CD4-positive, alpha-beta memory T cell (primary cell): ENCODE measurements at regions of chr1 and their contacts with region 1.

Region 1: GRCh38 chr1:110780600-110781484 is 92.1 kb upstream of the CD53 start:
- DNase-seq: peak; percentile 74 to 81 (median 76)
- H3K4me3 ChIP-seq: no peak overlapping the region
- H3K4me3 Mint-ChIP-seq: peak overlapping the region in 5 of 8 donors; percentile 3 to 47 (median 28)
- H3K27ac ChIP-seq: no peak overlapping the region
- H3K27ac Mint-ChIP-seq: peak overlapping the region in 3 of 7 donors; percentile 31 to 74 (median 67)
- H3K4me1 ChIP-seq: peaks cover 37% of the 10 kb centered on the region
- H3K4me1 Mint-ChIP-seq: peaks cover 33 to 51% (median 39%) of the 10 kb centered on the region in 4 donors
- H3K27me3 ChIP-seq: no peaks in the 10 kb centered on the region
- H3K27me3 Mint-ChIP-seq: peaks cover 0 to 1% of the 10 kb centered on the region in 2 donors

Region 2: DNA sequence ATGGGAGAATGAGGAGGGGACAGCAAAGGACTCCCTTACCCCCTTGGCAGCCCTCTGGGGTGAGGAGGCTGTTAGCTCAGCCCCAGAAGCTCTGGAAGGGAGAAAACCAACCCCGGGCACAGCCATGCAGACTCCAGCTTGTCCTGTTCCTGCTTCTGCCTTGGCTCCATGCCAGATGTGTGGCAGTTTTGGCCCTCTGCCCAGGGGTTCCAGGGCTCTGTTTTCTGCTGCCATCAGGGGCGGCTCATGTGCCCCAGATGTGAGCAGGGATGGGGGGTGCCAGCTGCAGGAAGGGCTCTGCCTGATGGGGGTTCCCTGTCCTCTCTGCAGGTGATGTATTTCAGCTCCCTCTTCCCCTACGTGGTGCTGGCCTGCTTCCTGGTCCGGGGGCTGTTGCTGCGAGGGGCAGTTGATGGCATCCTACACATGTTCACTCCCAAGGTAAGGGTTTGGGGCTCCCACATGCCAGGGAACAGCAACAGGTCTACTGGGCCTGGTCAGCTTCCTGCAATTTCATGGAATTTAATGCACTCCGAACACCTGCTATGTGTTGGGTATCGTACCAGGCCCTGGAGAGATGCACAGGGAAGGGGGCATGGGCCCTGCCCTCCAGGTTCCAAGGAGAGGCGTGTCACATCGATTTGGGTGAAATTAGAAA is 604.4 kb before region 1 on chr1:
- CTCF ChIA-PET with region 1: no interaction called
- POLR2A ChIA-PET with region 1: no interaction called
- intact Hi-C with region 1: no loop called
- DNase-seq: no peak
- H3K4me3 ChIP-seq: no peak overlapping the region
- H3K4me3 Mint-ChIP-seq: no peak overlapping the region
- H3K27ac ChIP-seq: no peak overlapping the region
- H3K27ac Mint-ChIP-seq: no peak overlapping the region
- H3K4me1 ChIP-seq: no peaks in the 10 kb centered on the region
- H3K4me1 Mint-ChIP-seq: no peaks in the 10 kb centered on the region
- H3K27me3 ChIP-seq: no peaks in the 10 kb centered on the region
- H3K27me3 Mint-ChIP-seq: peaks cover 3 to 23% of the 10 kb centered on the region in 2 donors

Region 3: DNA sequence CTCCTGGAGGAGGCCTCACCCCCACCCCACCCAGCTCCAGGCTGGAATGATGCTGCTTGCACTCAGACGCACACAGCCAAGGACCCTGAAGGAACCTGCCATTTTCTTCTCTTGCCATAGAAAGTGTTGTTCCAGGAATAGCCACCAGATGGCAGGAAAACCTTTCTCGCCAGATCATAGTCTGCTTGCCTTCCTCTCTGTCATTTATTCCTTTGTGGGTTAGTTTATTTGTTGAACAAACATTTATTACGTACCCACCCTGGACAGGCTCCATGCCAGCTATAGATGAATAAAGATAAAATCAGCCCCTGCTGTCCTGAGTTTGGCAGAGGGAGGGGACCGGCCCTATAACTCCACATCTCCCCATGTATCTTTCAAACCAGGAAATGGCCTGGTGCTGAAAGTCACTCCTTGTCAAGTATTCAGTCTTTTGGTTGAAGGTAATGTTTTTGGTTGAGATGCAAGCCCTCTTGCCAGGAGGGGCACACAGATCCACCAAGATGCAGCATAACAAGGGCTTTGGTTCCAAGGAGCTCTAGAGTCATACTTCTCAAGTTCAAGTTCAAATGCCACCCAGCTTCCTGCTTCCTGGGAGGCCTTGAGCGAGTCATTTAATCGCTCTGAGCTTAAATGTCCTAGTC is 577.7 kb before region 1 on chr1:
- CTCF ChIA-PET with region 1: interaction called, 10 read pairs
- POLR2A ChIA-PET with region 1: no interaction called
- intact Hi-C with region 1: loop called (anchors 1 kb)
- DNase-seq: peak; percentile 75 to 82 (median 78)
- H3K4me3 ChIP-seq: no peak overlapping the region
- H3K4me3 Mint-ChIP-seq: peak overlapping the region in 3 of 8 donors; percentile 2 to 44 (median 34)
- H3K27ac ChIP-seq: no peak overlapping the region
- H3K27ac Mint-ChIP-seq: peak overlapping the region; percentile 48 to 93 (median 83)
- H3K4me1 ChIP-seq: peaks cover 19% of the 10 kb centered on the region
- H3K4me1 Mint-ChIP-seq: peaks cover 13 to 31% (median 20%) of the 10 kb centered on the region in 4 donors
- H3K27me3 ChIP-seq: no peaks in the 10 kb centered on the region
- H3K27me3 Mint-ChIP-seq: no peaks in the 10 kb centered on the region

Region 4: GRCh38 chr1:110524311-110525251 is 256.3 kb before region 1 on chr1:
- CTCF ChIA-PET with region 1: interaction called, 11 read pairs
- POLR2A ChIA-PET with region 1: no interaction called
- intact Hi-C with region 1: loop called (anchors 1 kb)
- DNase-seq: peak in 4 of 5 donors; percentile 25 to 48 (median 44)
- H3K4me3 ChIP-seq: no peak overlapping the region
- H3K4me3 Mint-ChIP-seq: peak overlapping the region in 5 of 8 donors; percentile 14 to 61 (median 51)
- H3K27ac ChIP-seq: no peak overlapping the region
- H3K27ac Mint-ChIP-seq: no peak overlapping the region
- H3K4me1 ChIP-seq: no peaks in the 10 kb centered on the region
- H3K4me1 Mint-ChIP-seq: peaks cover 0 to 6% (median 2%) of the 10 kb centered on the region in 4 donors
- H3K27me3 ChIP-seq: peaks cover 5% of the 10 kb centered on the region
- H3K27me3 Mint-ChIP-seq: peaks cover 15 to 28% of the 10 kb centered on the region in 2 donors

Region 5: GRCh38 chr1:110612065-110612751 is 168.6 kb before region 1 on chr1:
- CTCF ChIA-PET with region 1: interaction called, 175 read pairs
- POLR2A ChIA-PET with region 1: no interaction called
- intact Hi-C with region 1: no loop called
- DNase-seq: no peak
- H3K4me3 ChIP-seq: no peak overlapping the region
- H3K4me3 Mint-ChIP-seq: no peak overlapping the region
- H3K27ac ChIP-seq: no peak overlapping the region
- H3K27ac Mint-ChIP-seq: no peak overlapping the region
- H3K4me1 ChIP-seq: peaks cover 22% of the 10 kb centered on the region
- H3K4me1 Mint-ChIP-seq: peaks cover 10 to 26% (median 20%) of the 10 kb centered on the region in 4 donors
- H3K27me3 ChIP-seq: peaks cover 7% of the 10 kb centered on the region
- H3K27me3 Mint-ChIP-seq: peaks cover 7 to 18% of the 10 kb centered on the region in 2 donors

Region 6: DNA sequence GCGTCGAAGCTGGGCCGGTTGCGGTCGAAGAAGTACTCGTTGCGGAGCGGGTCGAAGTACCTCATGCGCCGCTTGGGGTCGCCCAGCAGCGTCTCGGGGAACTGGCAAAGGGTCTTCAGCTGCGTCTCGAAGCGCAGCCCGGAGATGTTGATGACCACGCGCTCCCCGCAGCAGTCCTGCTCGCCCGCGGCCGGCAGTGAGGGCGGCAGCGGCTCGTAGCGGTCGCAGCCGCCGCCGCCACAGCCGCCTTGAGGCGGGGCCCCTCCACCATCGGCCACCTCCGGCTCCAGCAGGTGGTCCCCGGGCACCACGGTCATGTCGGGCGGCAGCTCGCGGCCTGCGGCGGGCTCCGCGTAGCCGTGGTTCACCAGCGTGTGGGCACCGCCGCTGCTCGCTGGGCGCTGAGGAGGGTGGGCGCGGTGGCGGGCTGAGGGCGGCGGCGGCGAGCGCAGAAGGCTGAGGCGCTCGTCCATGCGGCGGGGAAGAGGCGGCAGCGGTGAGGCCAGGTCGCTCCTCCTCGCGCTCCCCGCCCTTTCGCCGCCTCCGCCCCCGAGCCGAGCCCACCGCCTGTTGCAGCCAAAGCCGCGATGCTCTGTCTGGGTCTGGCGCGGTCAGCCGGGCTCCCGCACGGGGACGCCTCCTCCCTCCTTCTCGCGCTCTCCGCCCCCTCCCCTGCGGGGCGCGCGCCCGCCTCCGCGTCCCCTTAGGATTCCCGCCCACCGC is 106.3 kb before region 1 on chr1 and contains the start of gene KCNA3:
- CTCF ChIA-PET with region 1: interaction called, 6 read pairs
- POLR2A ChIA-PET with region 1: interaction called, 18 read pairs
- intact Hi-C with region 1: no loop called
- DNase-seq: peak; percentile 67 to 79 (median 69)
- H3K4me3 ChIP-seq: peak within 1 kb of the TSS; percentile 73 to 78
- H3K4me3 Mint-ChIP-seq: peak within 1 kb of the TSS; percentile 84 to 100 (median 100)
- H3K27ac ChIP-seq: peak within 1 kb of the TSS; percentile 91
- H3K27ac Mint-ChIP-seq: peak within 1 kb of the TSS; percentile 76 to 100 (median 99)
- H3K4me1 ChIP-seq: peaks cover 38% of the 10 kb centered on the region
- H3K4me1 Mint-ChIP-seq: peaks cover 28 to 79% (median 38%) of the 10 kb centered on the region in 4 donors
- H3K27me3 ChIP-seq: no peaks in the 10 kb centered on the region
- H3K27me3 Mint-ChIP-seq: no peaks in the 10 kb centered on the region
- total RNA-seq, gene KCNA3: 124 TPM

Region 7: DNA sequence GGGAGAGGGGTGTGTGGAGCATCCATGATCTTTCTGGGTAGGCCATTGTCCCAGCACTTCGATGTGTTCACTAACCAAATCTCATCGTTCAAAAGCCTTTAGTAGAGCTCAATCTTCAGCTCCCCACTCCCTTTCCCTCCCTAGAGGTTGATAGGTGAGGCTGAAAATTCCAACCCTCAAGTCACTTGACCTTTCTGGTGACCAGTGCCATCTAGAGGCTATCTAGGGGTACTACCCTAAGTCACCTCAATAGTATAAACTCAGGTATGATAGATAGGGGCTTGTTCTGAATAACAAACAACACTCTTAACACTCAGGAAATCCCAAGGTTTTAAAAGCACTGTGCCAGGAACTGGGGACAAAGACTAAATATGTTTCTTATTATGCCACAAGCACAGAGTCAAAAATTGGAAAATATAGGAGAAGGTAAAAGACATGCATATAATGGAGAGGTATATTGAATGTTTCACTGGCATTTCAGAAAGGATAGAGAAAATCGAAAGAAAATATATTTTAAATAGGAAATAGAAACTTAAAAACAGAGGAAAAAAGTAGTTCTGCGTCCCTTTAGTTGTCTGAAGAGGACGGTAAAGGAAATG is 49.2 kb after region 1 on chr1:
- CTCF ChIA-PET with region 1: interaction called, 145 read pairs
- POLR2A ChIA-PET with region 1: interaction called, 5 read pairs
- intact Hi-C with region 1: loop called (anchors 1 kb)
- DNase-seq: peak; percentile 41 to 63 (median 57)
- H3K4me3 ChIP-seq: no peak overlapping the region
- H3K4me3 Mint-ChIP-seq: no peak overlapping the region
- H3K27ac ChIP-seq: no peak overlapping the region
- H3K27ac Mint-ChIP-seq: peak overlapping the region in 1 of 7 donors; percentile 42
- H3K4me1 ChIP-seq: peaks cover 7% of the 10 kb centered on the region
- H3K4me1 Mint-ChIP-seq: peaks cover 5 to 8% (median 7%) of the 10 kb centered on the region in 4 donors
- H3K27me3 ChIP-seq: no peaks in the 10 kb centered on the region
- H3K27me3 Mint-ChIP-seq: peaks cover 0 to 10% of the 10 kb centered on the region in 2 donors

Region 8: GRCh38 chr1:111030590-111030989 is 249.7 kb after region 1 on chr1:
- CTCF ChIA-PET with region 1: interaction called, 6 read pairs
- POLR2A ChIA-PET with region 1: no interaction called
- intact Hi-C with region 1: loop called (anchors 1 kb)
- DNase-seq: peak; percentile 54 to 62 (median 59)
- H3K4me3 ChIP-seq: no peak overlapping the region
- H3K4me3 Mint-ChIP-seq: no peak overlapping the region
- H3K27ac ChIP-seq: no peak overlapping the region
- H3K27ac Mint-ChIP-seq: no peak overlapping the region
- H3K4me1 ChIP-seq: no peaks in the 10 kb centered on the region
- H3K4me1 Mint-ChIP-seq: no peaks in the 10 kb centered on the region
- H3K27me3 ChIP-seq: no peaks in the 10 kb centered on the region
- H3K27me3 Mint-ChIP-seq: peaks cover 5 to 12% of the 10 kb centered on the region in 2 donors